AG04450 (cell line): ENCODE measurements at regions of chr17 and their contacts with region 1.

Region 1: DNA sequence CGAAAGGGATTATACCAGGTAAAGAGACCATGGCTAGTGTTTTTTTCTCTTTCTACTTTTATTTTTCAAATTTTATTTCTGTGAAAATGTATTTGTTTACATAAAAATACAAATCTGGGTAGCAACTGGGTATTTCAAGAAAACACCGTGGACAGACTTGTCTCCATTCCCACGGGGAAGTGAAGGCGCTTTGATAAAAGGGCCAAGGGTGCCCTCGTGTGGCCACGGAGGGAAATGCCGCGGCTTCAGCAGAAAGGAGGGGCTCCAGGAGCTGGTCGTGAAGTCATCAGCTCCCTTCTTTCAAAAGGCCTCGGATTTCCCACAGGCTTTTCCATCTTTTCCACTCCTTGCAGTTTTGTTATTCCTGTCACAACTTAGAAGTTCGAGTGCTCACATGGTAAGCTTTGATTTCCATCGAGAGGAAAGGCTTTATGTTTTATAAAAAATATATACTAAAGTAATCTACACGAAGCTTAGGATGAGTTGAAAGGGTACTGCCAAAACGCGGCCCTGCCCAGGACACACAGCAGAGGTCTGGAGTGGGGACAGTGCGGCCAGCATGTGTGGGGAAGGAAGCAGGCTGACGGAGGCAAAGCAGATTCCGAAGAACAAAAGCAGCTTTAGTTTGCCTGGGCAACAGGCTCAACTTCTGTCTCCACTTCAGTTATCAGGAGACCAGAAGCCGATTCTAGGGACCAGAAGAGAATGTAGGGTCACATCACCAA is 15.3 kb upstream of the MNT start:
- DNase-seq: no peak
- H3K4me3 ChIP-seq: no peak overlapping the region
- H3K27ac ChIP-seq: peak overlapping the region; percentile 21
- H3K27me3 ChIP-seq: no peaks in the 10 kb centered on the region
- CTCF ChIP-seq: peak; percentile 91

Region 2: GRCh38 chr17:2386400-2387085 is 29.6 kb before region 1 on chr17:
- CTCF ChIA-PET with region 1: interaction called, 320 read pairs
- POLR2A ChIA-PET with region 1: interaction called, 18 read pairs
- DNase-seq: no peak
- H3K4me3 ChIP-seq: no peak overlapping the region
- H3K27ac ChIP-seq: no peak overlapping the region
- H3K27me3 ChIP-seq: no peaks in the 10 kb centered on the region
- CTCF ChIP-seq: no peak

Region 3: DNA sequence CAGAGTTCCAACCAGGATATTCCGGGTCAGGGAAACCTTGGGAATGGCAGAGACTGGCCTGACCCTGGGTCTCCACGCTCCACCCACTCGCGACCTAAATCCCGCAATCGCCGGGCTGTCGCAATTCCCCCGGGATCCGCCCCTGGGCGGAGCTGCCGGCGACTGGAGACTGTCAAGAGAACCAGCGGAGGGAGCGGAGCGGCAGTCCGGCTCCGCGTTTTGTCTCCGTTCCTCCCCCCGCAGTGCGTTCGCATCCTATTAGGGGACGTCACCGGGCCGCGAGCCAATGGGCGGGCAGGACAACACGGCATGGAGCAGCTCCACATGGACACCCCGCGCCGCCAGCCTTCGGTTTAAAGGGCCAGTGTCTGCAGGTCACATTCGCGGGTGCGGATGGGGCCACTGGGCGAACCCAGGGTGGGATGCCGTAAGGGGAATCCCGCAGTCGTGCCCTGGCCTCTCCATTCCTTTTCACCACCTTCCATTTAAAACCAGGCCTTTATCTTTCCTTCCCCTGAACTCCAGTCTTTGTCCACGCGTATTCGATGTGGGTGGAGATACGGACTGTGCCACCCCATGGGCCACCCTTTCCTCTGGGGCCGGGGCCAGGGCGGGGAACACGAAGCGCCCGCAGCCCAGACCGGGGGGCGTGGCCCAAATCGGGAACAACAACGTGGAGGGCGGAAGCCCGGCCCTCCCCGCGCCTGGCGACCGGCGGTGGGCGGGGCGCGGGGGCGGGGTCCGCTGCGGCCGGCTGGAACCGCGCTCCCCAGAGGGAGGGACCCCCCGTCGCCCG is 14.5 kb before region 1 on chr17:
- CTCF ChIA-PET with region 1: interaction called, 32 read pairs
- POLR2A ChIA-PET with region 1: interaction called, 6 read pairs
- DNase-seq: peak; percentile 100
- H3K4me3 ChIP-seq: peak overlapping the region; percentile 68
- H3K27ac ChIP-seq: peak overlapping the region; percentile 99
- H3K27me3 ChIP-seq: no peaks in the 10 kb centered on the region
- CTCF ChIP-seq: no peak

Region 4: GRCh38 chr17:2435181-2435741 is 19.1 kb after region 1 on chr17:
- CTCF ChIA-PET with region 1: interaction called, 10 read pairs
- POLR2A ChIA-PET with region 1: no interaction called
- DNase-seq: no peak
- H3K4me3 ChIP-seq: no peak overlapping the region
- H3K27ac ChIP-seq: no peak overlapping the region
- H3K27me3 ChIP-seq: no peaks in the 10 kb centered on the region
- CTCF ChIP-seq: no peak